PC-3 (cell line): ENCODE measurements at regions of chr9 and their contacts with region 1.

Region 1: GRCh38 chr9:108057421-108058134 is 568.0 kb upstream of the KLF4 start:
- DNase-seq: peak; percentile 88
- ATAC-seq: peak; percentile 90
- H3K4me3 ChIP-seq: no peak overlapping the region
- H3K27ac ChIP-seq: peak overlapping the region; percentile 98
- H3K4me1 ChIP-seq: peaks cover 28% of the 10 kb centered on the region
- H3K27me3 ChIP-seq: no peaks in the 10 kb centered on the region
- CTCF ChIP-seq: no peak

Region 2: DNA sequence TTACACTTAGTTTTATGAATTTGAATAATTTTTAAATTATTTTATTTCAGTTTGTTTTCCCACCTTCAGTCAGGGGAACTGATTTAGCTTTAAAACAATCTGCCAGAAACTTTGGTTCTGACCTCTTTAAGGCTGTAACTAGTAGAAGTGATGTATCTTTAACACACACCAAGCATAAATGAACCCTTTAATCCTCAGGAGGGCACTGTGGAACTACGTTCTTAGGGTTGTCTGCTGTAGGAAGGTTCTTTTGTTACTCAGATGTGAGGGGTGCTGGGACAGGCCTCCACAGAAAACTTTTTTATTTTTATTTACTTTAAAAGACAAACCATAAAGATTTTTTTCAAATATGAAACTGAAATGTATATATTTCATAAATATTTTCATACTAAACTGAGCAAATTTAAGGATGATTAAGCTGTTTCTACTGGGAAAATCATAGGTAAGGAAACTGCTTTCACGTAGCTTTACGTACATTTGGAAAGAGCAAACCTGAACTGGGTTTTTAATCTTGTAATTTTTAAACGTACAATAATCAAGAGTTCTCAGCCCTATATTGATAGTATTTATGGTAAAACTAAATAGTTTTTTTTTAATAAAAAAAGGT is 573.4 kb before region 1 on chr9:
- CTCF ChIA-PET with region 1: no interaction called
- POLR2A ChIA-PET with region 1: no interaction called
- intact Hi-C with region 1: loop called (anchors 2 kb)
- DNase-seq: peak; percentile 74
- ATAC-seq: peak; percentile 40
- H3K4me3 ChIP-seq: no peak overlapping the region
- H3K27ac ChIP-seq: no peak overlapping the region
- H3K4me1 ChIP-seq: peaks cover 27% of the 10 kb centered on the region
- H3K27me3 ChIP-seq: no peaks in the 10 kb centered on the region
- CTCF ChIP-seq: peak; percentile 66

Region 3: GRCh38 chr9:107755284-107755683 is 302.3 kb before region 1 on chr9:
- CTCF ChIA-PET with region 1: no interaction called
- POLR2A ChIA-PET with region 1: interaction called, 4 read pairs
- intact Hi-C with region 1: loop called (anchors 2 kb)
- DNase-seq: peak; percentile 92
- ATAC-seq: peak; percentile 57
- H3K4me3 ChIP-seq: no peak overlapping the region
- H3K27ac ChIP-seq: peak overlapping the region; percentile 89
- H3K4me1 ChIP-seq: peaks cover 44% of the 10 kb centered on the region
- H3K27me3 ChIP-seq: no peaks in the 10 kb centered on the region
- CTCF ChIP-seq: no peak

Region 4: DNA sequence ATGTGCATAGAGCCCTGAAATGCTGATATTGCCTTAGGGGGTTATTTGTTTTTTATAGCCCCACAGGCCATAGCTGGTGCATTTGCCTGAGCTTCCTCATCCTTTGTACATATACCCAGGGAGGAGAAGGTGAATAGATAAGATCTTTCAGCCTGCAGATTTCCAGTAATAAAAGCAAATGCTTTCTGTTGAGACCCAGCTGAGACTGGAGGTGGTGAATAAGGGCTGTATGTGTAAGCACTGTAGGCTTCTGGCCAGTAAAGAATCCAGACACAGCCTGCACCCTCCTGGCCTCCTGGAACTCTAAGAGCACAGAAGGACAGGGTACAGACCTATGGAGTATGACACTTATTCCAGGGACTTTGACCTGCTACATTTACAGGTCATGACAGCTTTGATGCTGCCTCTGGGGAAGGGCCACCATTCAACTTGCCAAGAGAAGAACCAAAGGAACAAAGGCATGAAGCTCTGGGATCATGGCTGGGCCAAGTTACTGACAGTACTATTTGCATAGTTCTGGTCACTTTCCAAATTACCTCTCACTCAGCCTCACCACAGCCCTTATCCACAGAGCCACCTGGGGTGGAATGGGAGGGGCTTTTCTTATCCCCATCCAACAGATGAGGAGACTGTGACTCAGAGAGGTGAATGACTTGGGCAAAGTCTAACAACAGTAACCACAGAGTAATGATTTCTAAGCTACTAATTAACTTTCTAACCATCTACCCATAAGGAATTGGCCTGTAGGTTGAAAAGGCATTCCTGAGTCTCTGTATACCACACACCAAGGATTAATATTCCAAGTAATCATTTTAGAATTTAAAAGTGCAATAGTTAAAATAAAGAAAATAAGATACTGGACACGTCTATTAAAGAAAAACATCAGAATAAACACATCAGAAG is 36.4 kb after region 1 on chr9:
- CTCF ChIA-PET with region 1: no interaction called
- POLR2A ChIA-PET with region 1: no interaction called
- intact Hi-C with region 1: loop called (anchors 2 kb)
- DNase-seq: peak; percentile 90
- ATAC-seq: peak; percentile 96
- H3K4me3 ChIP-seq: no peak overlapping the region
- H3K27ac ChIP-seq: peak overlapping the region; percentile 83
- H3K4me1 ChIP-seq: peaks cover 27% of the 10 kb centered on the region
- H3K27me3 ChIP-seq: no peaks in the 10 kb centered on the region
- CTCF ChIP-seq: no peak

Region 5: DNA sequence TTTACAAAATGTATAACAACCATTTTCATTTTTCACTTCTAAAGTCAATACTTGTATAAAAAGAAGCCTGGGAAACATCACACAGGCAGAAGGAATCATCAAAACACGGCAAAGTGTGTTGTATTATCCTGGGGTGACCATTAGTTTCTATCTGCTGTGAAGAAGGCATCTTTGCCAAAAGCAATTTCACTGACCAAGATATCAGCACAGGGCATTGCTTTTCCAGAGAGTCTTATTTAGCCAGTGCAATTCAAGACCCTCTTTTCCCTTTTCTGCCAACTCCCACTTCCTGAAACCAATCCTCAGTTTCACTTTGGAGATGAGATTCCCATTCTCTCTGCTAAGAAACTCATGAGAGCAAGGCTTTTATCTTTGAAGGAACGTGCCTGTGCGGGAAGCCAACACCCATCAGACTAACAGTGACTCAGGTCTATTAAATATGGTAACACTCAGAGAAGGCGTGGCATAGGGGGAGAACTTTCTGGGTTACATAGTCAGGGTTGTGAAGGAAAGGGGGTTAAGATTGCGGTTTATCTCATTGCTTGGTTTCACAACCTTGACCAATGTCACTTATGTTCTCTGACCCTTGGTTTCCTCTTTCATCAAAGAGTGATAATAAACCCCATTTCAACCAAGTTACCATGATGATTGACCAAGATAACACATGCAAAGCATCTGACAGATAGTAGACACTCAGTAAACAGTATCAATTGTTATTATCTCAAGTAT is 98.9 kb after region 1 on chr9:
- CTCF ChIA-PET with region 1: no interaction called
- POLR2A ChIA-PET with region 1: no interaction called
- intact Hi-C with region 1: loop called (anchors 5 kb)
- DNase-seq: peak; percentile 76
- ATAC-seq: peak; percentile 93
- H3K4me3 ChIP-seq: peak overlapping the region; percentile 47
- H3K27ac ChIP-seq: peak overlapping the region; percentile 62
- H3K4me1 ChIP-seq: peaks cover 15% of the 10 kb centered on the region
- H3K27me3 ChIP-seq: no peaks in the 10 kb centered on the region
- CTCF ChIP-seq: no peak